Endothelial cell of umbilical vein (primary cell): ENCODE measurements at regions of chr2 and their contacts with region 1.

Region 1: GRCh38 chr2:233404222-233404621 is 49.9 kb downstream of the DGKD start:
- DNase-seq: peak; percentile 57
- H3K4me3 ChIP-seq: no peak overlapping the region
- H3K27ac ChIP-seq: no peak overlapping the region
- H3K4me1 ChIP-seq: peaks cover 4% of the 10 kb centered on the region
- H3K27me3 ChIP-seq: no peaks in the 10 kb centered on the region
- CTCF ChIP-seq: peak; percentile 75 to 80
- POLR2A ChIP-seq: no peak

Region 2: DNA sequence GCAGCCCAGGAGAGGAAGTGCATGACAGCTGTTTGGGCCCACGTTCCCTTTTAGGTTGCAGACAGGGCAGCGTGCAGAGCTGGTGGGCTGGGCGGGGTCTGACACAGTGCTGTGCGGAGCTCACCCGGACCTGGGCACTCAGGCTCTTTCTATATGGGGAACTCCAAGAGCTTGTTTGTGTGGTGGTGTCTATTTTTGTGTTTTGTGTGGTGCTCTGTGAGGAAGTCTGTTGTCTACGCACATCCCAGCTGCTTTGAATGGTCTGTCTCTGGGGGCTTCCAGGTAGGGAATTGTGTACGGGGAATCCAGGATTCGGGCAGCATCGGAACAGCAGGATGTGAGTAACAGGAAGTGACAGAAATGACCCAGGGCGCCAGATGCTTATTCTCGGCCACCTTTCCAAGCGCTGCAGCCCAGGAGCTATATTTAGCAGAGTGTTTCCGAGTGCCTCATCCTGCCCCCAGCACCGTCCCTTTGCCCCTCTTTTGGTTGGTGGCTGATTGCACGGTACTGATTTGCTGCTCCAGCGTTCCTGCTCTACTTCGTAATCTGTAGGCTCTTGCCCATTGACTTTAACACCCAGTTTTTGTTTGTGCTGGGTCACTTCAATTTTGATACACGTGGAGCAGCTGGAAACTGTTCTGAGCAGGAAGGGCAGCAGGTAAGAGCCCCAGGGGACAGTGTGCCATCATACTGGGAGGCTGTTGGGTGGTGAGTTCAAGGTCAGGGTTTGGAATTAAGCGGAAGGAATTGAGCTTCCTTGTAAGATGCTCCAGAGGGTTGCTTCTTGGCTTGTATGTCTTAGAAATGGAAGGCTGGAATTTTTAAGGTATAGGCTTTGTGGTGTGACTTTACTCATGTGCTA is 14.8 kb after region 1 on chr2:
- CTCF ChIA-PET with region 1: interaction called, 73 read pairs
- POLR2A ChIA-PET with region 1: no interaction called
- dilution Hi-C with region 1: no loop called
- intact Hi-C with region 1: loop called (anchors 1 kb)
- DNase-seq: peak; percentile 87
- H3K4me3 ChIP-seq: peak overlapping the region in 1 of 3 experiments; percentile 33
- H3K27ac ChIP-seq: peak overlapping the region; percentile 89
- H3K4me1 ChIP-seq: peaks cover 41% of the 10 kb centered on the region
- H3K27me3 ChIP-seq: no peaks in the 10 kb centered on the region
- CTCF ChIP-seq: no peak
- POLR2A ChIP-seq: no peak

Region 3: GRCh38 chr2:233711312-233712008 is 307.2 kb after region 1 on chr2:
- CTCF ChIA-PET with region 1: interaction called, 7 read pairs
- POLR2A ChIA-PET with region 1: no interaction called
- dilution Hi-C with region 1: no loop called
- intact Hi-C with region 1: loop called (anchors 1 kb)
- DNase-seq: peak; percentile 66
- H3K4me3 ChIP-seq: no peak overlapping the region
- H3K27ac ChIP-seq: no peak overlapping the region
- H3K4me1 ChIP-seq: peaks cover 2% of the 10 kb centered on the region
- H3K27me3 ChIP-seq: peaks cover 0 to 2% of the 10 kb centered on the region in 2 experiments
- CTCF ChIP-seq: peak; percentile 89 to 90
- POLR2A ChIP-seq: no peak

Region 4: GRCh38 chr2:233832869-233833311 is 428.7 kb after region 1 on chr2:
- CTCF ChIA-PET with region 1: interaction called, 14 read pairs
- POLR2A ChIA-PET with region 1: no interaction called
- dilution Hi-C with region 1: no loop called
- intact Hi-C with region 1: no loop called
- DNase-seq: peak; percentile 30
- H3K4me3 ChIP-seq: no peak overlapping the region
- H3K27ac ChIP-seq: no peak overlapping the region
- H3K4me1 ChIP-seq: no peaks in the 10 kb centered on the region
- H3K27me3 ChIP-seq: no peaks in the 10 kb centered on the region
- CTCF ChIP-seq: peak in 1 of 2 donors; percentile 42
- POLR2A ChIP-seq: no peak

Region 5: DNA sequence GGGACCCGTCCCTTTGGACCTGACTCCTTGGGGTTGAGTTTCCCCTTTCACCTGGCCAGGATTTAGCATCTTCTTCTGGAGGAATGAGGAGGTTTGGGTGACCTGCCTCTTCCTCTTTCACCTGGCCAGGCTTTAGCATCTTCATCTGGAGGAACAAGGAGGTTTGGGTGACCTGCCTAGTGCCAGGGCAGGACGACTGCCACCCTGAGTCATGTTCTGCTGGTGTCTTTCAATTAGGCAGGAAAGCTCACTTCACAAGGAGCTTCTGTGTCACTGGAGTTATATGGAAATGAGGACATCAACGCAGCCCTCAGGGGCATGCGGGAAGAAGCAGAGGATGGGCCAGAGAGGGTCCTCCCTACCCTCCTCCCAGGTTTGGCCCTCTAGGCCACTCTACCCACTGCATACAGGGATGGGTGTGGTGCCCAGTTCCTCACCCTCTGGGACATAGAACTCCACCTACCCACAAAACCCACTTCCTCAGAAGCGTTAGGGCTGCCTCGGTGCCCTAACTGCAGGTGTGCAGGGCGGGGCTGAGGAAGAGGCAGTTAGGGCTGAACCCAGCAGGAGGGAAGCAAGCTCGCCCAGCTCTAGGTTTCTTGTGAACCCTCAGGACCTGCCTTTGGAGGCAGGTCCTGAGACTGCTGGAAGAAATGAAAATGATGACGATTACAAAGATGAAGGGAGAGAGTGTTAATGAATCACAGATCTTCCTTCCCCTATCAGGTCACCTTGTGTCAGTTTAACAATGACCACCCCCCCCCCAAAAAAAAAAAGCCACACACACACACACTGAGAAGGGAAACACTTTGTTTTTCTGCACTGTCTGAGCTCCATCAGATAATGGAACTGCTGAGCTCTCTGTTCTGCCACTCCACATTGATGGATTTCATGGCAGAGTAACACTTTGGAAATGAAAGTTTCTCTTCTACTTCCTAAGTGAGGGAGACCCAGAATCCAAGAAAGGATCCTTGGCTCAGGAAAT is 1021.7 kb after region 1 on chr2:
- CTCF ChIA-PET with region 1: no interaction called
- POLR2A ChIA-PET with region 1: no interaction called
- dilution Hi-C with region 1: no loop called
- intact Hi-C with region 1: no loop called
- DNase-seq: no peak
- H3K4me3 ChIP-seq: no peak overlapping the region
- H3K27ac ChIP-seq: no peak overlapping the region
- H3K4me1 ChIP-seq: peaks cover 36% of the 10 kb centered on the region
- H3K27me3 ChIP-seq: no peaks in the 10 kb centered on the region
- CTCF ChIP-seq: no peak
- POLR2A ChIP-seq: no peak